ENCODE measurements at regions of chr15 and their contacts with region 1.

Region 1: GRCh38 chr15:64093627-64094417 is at the start of gene CIAO2A:
- DNase-seq: peak; percentile 96
- ATAC-seq: peak; percentile 70
- H3K4me3 ChIP-seq: peak within 1 kb of the TSS; percentile 76 to 94 (median 84)
- H3K4me3 Mint-ChIP-seq: peak within 1 kb of the TSS; percentile 97
- H3K27ac ChIP-seq: peak within 1 kb of the TSS; percentile 90 to 95
- H3K27ac Mint-ChIP-seq: peak within 1 kb of the TSS; percentile 98
- H3K4me1 ChIP-seq: peaks cover 79% of the 10 kb centered on the region in 2 donors
- H3K4me1 Mint-ChIP-seq: peaks cover 82% of the 10 kb centered on the region
- H3K27me3 ChIP-seq: no peaks in the 10 kb centered on the region
- H3K27me3 Mint-ChIP-seq: no peaks in the 10 kb centered on the region
- CTCF ChIP-seq: no peak
- total RNA-seq, gene CIAO2A: 64.4 and 68.2 TPM in 2 replicates

Region 2: GRCh38 chr15:63473999-63474809 is 619.6 kb before region 1 on chr15:
- CTCF ChIA-PET with region 1: no interaction called
- POLR2A ChIA-PET with region 1: no interaction called
- intact Hi-C with region 1: loop called (anchors 5 kb)
- DNase-seq: peak; percentile 85
- ATAC-seq: peak; percentile 69
- H3K4me3 ChIP-seq: peak overlapping the region in 4 of 5 experiments; percentile 4 to 38 (median 30)
- H3K4me3 Mint-ChIP-seq: peak overlapping the region; percentile 83
- H3K27ac ChIP-seq: peak overlapping the region; percentile 90 to 95
- H3K27ac Mint-ChIP-seq: peak overlapping the region; percentile 97
- H3K4me1 ChIP-seq: peaks cover 59 to 64% of the 10 kb centered on the region in 2 donors
- H3K4me1 Mint-ChIP-seq: peaks cover 69% of the 10 kb centered on the region
- H3K27me3 ChIP-seq: no peaks in the 10 kb centered on the region
- H3K27me3 Mint-ChIP-seq: no peaks in the 10 kb centered on the region
- CTCF ChIP-seq: peak; percentile 25

Region 3: GRCh38 chr15:63826528-63826927 is 267.3 kb before region 1 on chr15:
- CTCF ChIA-PET with region 1: interaction called, 6 read pairs
- POLR2A ChIA-PET with region 1: interaction called, 3 read pairs
- intact Hi-C with region 1: loop called (anchors 2 kb)
- DNase-seq: peak; percentile 62
- ATAC-seq: peak; percentile 31
- H3K4me3 ChIP-seq: no peak overlapping the region
- H3K4me3 Mint-ChIP-seq: no peak overlapping the region
- H3K27ac ChIP-seq: no peak overlapping the region
- H3K27ac Mint-ChIP-seq: peak overlapping the region; percentile 73
- H3K4me1 ChIP-seq: peaks cover 4 to 13% of the 10 kb centered on the region in 2 donors
- H3K4me1 Mint-ChIP-seq: peaks cover 58% of the 10 kb centered on the region
- H3K27me3 ChIP-seq: no peaks in the 10 kb centered on the region
- H3K27me3 Mint-ChIP-seq: no peaks in the 10 kb centered on the region
- CTCF ChIP-seq: peak; percentile 56

Region 4: DNA sequence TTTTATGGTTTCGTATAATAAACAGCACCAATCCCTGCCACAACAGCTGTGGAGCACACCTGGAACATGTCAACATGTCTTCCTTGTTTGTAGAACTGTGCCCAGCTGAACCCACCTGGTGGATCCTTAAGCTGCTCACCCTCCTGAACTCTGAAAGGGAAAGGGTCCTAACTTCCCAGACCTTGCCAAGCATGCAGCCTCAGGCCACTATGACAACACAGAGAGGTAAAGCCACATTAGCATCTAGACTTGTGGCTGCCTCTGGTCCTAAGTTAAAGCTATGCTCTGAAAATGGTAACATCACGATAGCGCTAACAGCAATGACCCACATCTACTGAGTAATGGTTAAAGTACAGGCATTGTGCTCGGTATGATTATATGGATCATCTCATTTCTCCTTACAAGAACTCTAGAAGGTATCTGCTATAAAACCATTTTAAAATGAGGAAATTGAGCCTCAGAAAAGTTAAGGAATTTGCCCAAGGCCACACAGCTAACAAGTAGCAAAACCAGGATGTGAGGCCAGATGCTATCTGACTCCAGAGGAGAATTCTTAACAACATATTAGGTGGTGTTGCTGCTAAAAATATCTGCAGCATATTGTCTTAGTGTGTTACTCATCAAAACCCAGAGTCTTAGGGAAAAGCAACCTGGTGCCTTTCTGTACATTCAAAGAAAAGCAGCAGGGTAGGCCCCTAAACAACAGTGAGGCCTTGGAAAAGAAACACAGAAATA is 236.9 kb before region 1 on chr15:
- CTCF ChIA-PET with region 1: no interaction called
- POLR2A ChIA-PET with region 1: no interaction called
- intact Hi-C with region 1: no loop called
- DNase-seq: no peak
- ATAC-seq: no peak
- H3K4me3 ChIP-seq: no peak overlapping the region
- H3K4me3 Mint-ChIP-seq: no peak overlapping the region
- H3K27ac ChIP-seq: no peak overlapping the region
- H3K27ac Mint-ChIP-seq: no peak overlapping the region
- H3K4me1 ChIP-seq: peaks cover 31 to 32% of the 10 kb centered on the region in 2 donors
- H3K4me1 Mint-ChIP-seq: peaks cover 30% of the 10 kb centered on the region
- H3K27me3 ChIP-seq: no peaks in the 10 kb centered on the region
- H3K27me3 Mint-ChIP-seq: no peaks in the 10 kb centered on the region
- CTCF ChIP-seq: no peak

Region 5: GRCh38 chr15:63990454-63990853 is 103.4 kb before region 1 on chr15:
- CTCF ChIA-PET with region 1: no interaction called
- POLR2A ChIA-PET with region 1: no interaction called
- intact Hi-C with region 1: no loop called
- DNase-seq: peak; percentile 51
- ATAC-seq: no peak
- H3K4me3 ChIP-seq: no peak overlapping the region
- H3K4me3 Mint-ChIP-seq: peak overlapping the region; percentile 32
- H3K27ac ChIP-seq: peak overlapping the region in 1 of 2 donors; percentile 22
- H3K27ac Mint-ChIP-seq: peak overlapping the region; percentile 62
- H3K4me1 ChIP-seq: peaks cover 63% of the 10 kb centered on the region in 2 donors
- H3K4me1 Mint-ChIP-seq: peaks cover 70% of the 10 kb centered on the region
- H3K27me3 ChIP-seq: no peaks in the 10 kb centered on the region
- H3K27me3 Mint-ChIP-seq: no peaks in the 10 kb centered on the region
- CTCF ChIP-seq: no peak

Region 6: DNA sequence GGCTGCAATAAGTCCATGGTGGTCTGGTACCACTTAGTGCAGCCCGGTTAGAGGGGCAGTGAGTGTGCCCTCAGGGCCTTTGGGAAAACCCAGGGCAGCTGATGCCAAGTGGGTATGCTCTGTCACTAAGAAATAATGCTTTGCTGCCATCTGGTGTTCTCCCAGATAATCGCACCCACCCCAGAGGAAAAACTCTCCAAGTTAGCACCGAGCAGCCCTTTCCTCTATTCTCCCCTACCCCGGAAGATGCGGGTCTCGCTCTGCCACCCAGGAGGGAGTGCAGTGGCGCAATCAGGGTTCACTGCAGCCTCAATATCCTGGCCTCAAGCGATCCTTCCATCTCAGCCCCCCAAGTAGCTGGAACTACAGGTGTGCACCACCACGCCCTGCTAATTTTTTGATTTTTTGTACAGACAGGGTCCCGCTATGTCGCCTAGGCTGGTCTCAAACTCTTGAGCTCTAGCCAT is 26.2 kb before region 1 on chr15:
- CTCF ChIA-PET with region 1: interaction called, 32 read pairs
- POLR2A ChIA-PET with region 1: interaction called, 3 read pairs
- intact Hi-C with region 1: no loop called
- DNase-seq: peak; percentile 84
- ATAC-seq: peak; percentile 91
- H3K4me3 ChIP-seq: no peak overlapping the region
- H3K4me3 Mint-ChIP-seq: no peak overlapping the region
- H3K27ac ChIP-seq: no peak overlapping the region
- H3K27ac Mint-ChIP-seq: peak overlapping the region; percentile 39
- H3K4me1 ChIP-seq: peaks cover 24 to 27% of the 10 kb centered on the region in 2 donors
- H3K4me1 Mint-ChIP-seq: peaks cover 26% of the 10 kb centered on the region
- H3K27me3 ChIP-seq: no peaks in the 10 kb centered on the region
- H3K27me3 Mint-ChIP-seq: no peaks in the 10 kb centered on the region
- CTCF ChIP-seq: peak; percentile 89

Region 7: GRCh38 chr15:64162870-64163658 is 69.2 kb after region 1 on chr15 and contains the start of gene PPIB:
- CTCF ChIA-PET with region 1: interaction called, 5 read pairs
- POLR2A ChIA-PET with region 1: interaction called, 10 read pairs
- intact Hi-C with region 1: loop called (anchors 1 kb)
- DNase-seq: peak; percentile 98
- ATAC-seq: peak; percentile 91
- H3K4me3 ChIP-seq: peak within 1 kb of the TSS; percentile 65 to 86 (median 85)
- H3K4me3 Mint-ChIP-seq: peak within 1 kb of the TSS; percentile 92
- H3K27ac ChIP-seq: peak within 1 kb of the TSS; percentile 72 to 87
- H3K27ac Mint-ChIP-seq: peak within 1 kb of the TSS; percentile 96
- H3K4me1 ChIP-seq: peaks cover 42 to 58% of the 10 kb centered on the region in 2 donors
- H3K4me1 Mint-ChIP-seq: peaks cover 52% of the 10 kb centered on the region
- H3K27me3 ChIP-seq: no peaks in the 10 kb centered on the region
- H3K27me3 Mint-ChIP-seq: no peaks in the 10 kb centered on the region
- CTCF ChIP-seq: peak; percentile 32
- total RNA-seq, gene PPIB: 107 and 108 TPM in 2 replicates

Region 8: GRCh38 chr15:64412216-64412615 is 318.4 kb after region 1 on chr15:
- CTCF ChIA-PET with region 1: no interaction called
- POLR2A ChIA-PET with region 1: no interaction called
- intact Hi-C with region 1: no loop called
- DNase-seq: no peak
- ATAC-seq: no peak
- H3K4me3 ChIP-seq: no peak overlapping the region
- H3K4me3 Mint-ChIP-seq: no peak overlapping the region
- H3K27ac ChIP-seq: no peak overlapping the region
- H3K27ac Mint-ChIP-seq: no peak overlapping the region
- H3K4me1 ChIP-seq: no peaks in the 10 kb centered on the region
- H3K4me1 Mint-ChIP-seq: no peaks in the 10 kb centered on the region
- H3K27me3 ChIP-seq: no peaks in the 10 kb centered on the region
- H3K27me3 Mint-ChIP-seq: no peaks in the 10 kb centered on the region
- CTCF ChIP-seq: no peak

Measured in B cell (primary cell).